ENCODE measurements at regions of chr11 and their contacts with region 1.

Region 1: DNA sequence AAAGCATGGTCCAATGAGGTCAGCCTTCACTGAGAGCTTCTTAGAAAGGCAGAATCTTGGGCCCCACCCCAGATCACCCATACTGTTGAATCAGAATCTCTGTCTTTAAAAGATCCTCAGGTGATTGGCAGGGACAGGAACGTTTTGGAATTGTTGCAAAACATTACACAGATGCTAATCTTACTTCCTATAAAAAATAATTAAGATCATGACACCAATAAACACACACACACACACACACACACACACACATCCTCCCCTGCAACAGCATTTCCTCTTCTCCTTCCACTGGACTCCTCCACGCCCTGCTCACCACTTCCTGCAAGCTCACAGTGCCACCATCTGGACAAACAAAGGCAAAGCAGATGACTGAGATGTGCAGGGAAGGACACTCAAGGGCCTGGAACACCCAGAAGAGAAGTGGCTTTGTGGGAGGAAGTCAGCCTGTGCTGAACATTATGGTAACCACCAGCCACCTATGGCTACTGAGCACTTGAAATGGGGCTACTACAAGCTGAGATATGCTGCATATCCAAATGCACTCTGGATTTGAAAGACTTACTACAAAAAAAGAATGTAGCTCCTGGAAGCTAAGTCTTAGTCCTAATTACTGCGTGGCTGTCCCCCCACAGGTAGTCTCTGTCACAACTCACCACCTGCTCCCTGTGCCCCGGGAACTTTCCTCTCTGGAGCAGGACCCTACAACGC is 65.6 kb downstream of the BTG4 start:
- DNase-seq: peak; percentile 82
- H3K4me3 ChIP-seq: no peak overlapping the region
- H3K27ac ChIP-seq: peak overlapping the region in 2 of 4 donors; percentile 15 to 28
- H3K4me1 ChIP-seq: peaks cover 0 to 13% (median 10%) of the 10 kb centered on the region in 3 donors
- H3K27me3 ChIP-seq: no peaks in the 10 kb centered on the region
- CTCF ChIP-seq: peak; percentile 74 to 93 (median 84)
- POLR2A ChIP-seq: no peak

Region 2: DNA sequence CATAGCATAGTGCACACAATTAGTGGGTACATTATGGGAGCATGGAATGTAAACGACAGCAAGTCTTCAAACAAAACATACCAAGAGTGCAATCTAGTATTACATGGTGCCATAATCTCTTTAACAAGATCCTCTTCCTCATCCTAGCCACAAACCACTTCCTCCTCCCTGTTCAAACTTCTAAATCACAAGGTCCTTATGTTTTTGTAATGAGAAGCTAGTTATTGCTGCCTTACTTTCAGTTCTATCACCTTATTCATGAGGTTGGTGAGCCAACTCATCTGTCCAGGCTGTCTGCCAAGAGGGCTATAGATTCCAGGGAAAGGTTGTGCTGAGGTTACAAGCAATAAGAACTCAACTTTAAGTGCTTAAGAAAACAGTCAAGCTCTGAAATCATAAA is 538.9 kb before region 1 on chr11:
- intact Hi-C with region 1: no loop called
- DNase-seq: no peak
- H3K4me3 ChIP-seq: no peak overlapping the region
- H3K27ac ChIP-seq: peak overlapping the region in 3 of 4 donors; percentile 70 to 79 (median 73)
- H3K4me1 ChIP-seq: peaks cover 12 to 61% (median 15%) of the 10 kb centered on the region in 3 donors
- H3K27me3 ChIP-seq: no peaks in the 10 kb centered on the region
- CTCF ChIP-seq: no peak
- POLR2A ChIP-seq: no peak

Region 3: DNA sequence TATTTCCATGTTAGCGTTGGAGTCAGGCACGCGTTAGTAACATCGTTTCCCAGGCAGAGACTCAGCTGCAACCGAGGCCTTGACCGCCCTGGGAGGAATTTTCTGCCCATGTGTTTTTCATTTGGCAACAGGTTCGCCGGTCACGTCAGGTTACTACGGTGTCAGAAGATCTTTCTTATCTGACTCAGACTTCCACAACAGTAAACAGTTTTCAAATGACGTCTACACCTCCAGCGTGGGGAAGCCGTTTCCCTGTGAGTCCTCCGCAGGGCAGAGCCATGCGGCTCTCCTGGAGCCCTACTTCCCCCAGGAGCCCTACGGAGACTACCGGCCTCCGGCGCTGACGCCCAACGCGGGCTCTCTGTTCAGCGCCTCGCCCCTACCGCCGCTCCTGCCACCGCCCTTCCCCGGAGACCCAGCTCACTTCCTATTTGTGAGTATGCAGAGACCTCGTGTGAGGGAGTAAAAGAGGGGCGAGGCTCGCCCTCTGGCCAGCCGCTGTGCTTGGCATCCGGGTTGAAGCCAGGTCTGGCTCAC is 162.5 kb before region 1 on chr11:
- intact Hi-C with region 1: loop called (anchors 5 kb)
- DNase-seq: no peak
- H3K4me3 ChIP-seq: no peak overlapping the region
- H3K27ac ChIP-seq: no peak overlapping the region
- H3K4me1 ChIP-seq: peaks cover 0 to 4% (median 0%) of the 10 kb centered on the region in 3 donors
- H3K27me3 ChIP-seq: no peaks in the 10 kb centered on the region
- CTCF ChIP-seq: no peak
- POLR2A ChIP-seq: no peak

Region 4: DNA sequence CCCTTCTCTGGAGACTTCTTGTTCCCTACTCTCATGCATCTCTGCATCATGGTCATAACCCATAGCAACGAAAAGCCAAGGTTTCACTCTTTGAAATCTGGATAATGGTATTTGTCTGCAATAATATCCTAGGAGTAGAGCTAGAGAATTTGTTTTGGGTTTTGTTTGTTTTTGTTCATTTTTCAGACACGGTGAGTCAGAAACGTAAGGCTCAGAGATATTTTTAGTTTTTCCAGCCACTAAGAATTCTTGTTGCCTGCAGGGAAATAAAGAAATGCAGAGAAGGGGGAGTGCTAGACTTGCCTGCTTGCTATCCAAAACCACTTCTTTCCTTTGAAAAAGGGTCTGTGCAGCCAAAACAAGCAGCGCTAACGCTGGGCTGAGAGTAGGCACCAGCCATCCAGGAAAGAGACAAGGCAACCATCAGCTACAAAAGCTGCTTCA is 122.3 kb before region 1 on chr11:
- intact Hi-C with region 1: no loop called
- DNase-seq: no peak
- H3K4me3 ChIP-seq: no peak overlapping the region
- H3K27ac ChIP-seq: no peak overlapping the region
- H3K4me1 ChIP-seq: peaks cover 6 to 32% (median 17%) of the 10 kb centered on the region in 3 donors
- H3K27me3 ChIP-seq: no peaks in the 10 kb centered on the region
- CTCF ChIP-seq: no peak
- POLR2A ChIP-seq: no peak